ENCODE measurements at regions of chr16 and their contacts with region 1.

Region 1: DNA sequence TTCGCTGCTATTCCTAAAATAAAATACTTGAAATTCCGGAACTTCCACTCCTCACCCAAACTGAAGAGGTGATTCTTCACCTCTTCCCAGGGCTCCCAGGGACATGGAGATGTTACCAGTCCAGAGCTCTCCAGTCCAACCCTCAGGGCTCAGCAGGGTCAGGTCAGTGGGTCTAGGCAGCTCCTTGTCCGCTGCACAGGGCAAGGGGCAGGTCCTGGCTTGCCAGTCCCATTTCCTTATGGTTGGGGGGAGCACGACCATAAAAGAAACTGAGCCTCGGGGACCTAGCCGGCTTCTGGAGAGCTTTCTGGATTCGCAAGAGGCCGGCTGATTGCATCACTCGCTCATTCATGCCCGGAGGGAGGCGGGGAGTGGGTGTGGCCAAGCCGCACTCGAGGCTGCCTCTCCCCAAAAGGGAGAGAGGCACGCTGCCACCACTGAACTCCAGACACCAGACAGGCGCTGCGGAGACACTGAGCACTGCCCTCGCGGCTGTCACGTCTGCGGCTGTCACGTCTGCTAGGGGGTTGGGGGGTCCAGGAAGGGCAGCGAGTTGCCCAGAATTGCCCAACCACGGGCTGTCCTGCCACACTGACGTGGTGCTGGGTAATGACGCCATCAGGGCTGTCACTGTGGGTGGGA is 15.8 kb downstream of the SLC7A5 start:
- DNase-seq: peak; percentile 95
- H3K4me3 Mint-ChIP-seq: peak overlapping the region; percentile 65
- H3K27ac Mint-ChIP-seq: peak overlapping the region; percentile 89
- H3K4me1 Mint-ChIP-seq: peaks cover 60% of the 10 kb centered on the region
- H3K27me3 Mint-ChIP-seq: no peaks in the 10 kb centered on the region

Region 2: GRCh38 chr16:87252269-87252970 is 601.1 kb before region 1 on chr16:
- CTCF ChIA-PET with region 1: no interaction called
- DNase-seq: no peak
- H3K4me3 Mint-ChIP-seq: no peak overlapping the region
- H3K27ac Mint-ChIP-seq: no peak overlapping the region
- H3K4me1 Mint-ChIP-seq: peaks cover 8% of the 10 kb centered on the region
- H3K27me3 Mint-ChIP-seq: peaks cover 7% of the 10 kb centered on the region

Region 3: GRCh38 chr16:87806603-87807546 is 46.7 kb before region 1 on chr16:
- CTCF ChIA-PET with region 1: interaction called, 12 read pairs
- DNase-seq: peak; percentile 74
- H3K4me3 Mint-ChIP-seq: peak overlapping the region; percentile 83
- H3K27ac Mint-ChIP-seq: peak overlapping the region; percentile 97
- H3K4me1 Mint-ChIP-seq: peaks cover 45% of the 10 kb centered on the region
- H3K27me3 Mint-ChIP-seq: peaks cover 45% of the 10 kb centered on the region

Region 4: DNA sequence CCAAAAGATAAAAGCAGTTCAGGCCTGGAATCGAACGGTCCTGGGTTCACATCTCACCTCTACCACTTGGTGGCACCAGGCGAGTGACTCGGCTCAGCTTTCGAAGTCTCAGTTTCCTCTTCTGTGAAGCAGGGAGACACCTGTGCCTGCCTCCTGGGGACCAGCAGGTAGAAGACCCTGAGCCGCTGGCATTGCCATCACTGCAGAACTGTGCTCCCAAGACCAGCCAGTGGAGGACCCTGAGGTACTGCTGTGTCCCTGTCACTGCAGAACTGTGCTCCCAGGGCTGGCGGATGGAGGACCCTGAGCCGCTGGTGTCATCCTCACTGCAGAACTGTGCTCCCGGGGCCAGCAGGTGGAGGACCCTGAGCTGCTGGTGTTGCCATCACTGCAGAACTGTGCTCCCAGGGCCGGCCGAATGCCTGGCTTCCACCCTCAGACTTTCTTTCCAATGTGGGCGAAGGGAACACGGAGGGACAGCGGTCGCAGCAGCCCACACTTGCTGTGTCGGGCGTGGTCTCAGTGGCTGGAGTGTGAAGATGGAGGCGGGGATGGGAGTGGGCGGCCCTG is 24.5 kb after region 1 on chr16:
- CTCF ChIA-PET with region 1: interaction called, 254 read pairs
- DNase-seq: peak; percentile 62
- H3K4me3 Mint-ChIP-seq: no peak overlapping the region
- H3K27ac Mint-ChIP-seq: no peak overlapping the region
- H3K4me1 Mint-ChIP-seq: peaks cover 25% of the 10 kb centered on the region
- H3K27me3 Mint-ChIP-seq: peaks cover 42% of the 10 kb centered on the region

Region 5: GRCh38 chr16:87895641-87896141 is 42.2 kb after region 1 on chr16:
- CTCF ChIA-PET with region 1: interaction called, 14 read pairs
- DNase-seq: peak; percentile 87
- H3K4me3 Mint-ChIP-seq: peak overlapping the region; percentile 36
- H3K27ac Mint-ChIP-seq: peak overlapping the region; percentile 95
- H3K4me1 Mint-ChIP-seq: peaks cover 57% of the 10 kb centered on the region
- H3K27me3 Mint-ChIP-seq: no peaks in the 10 kb centered on the region

Region 6: DNA sequence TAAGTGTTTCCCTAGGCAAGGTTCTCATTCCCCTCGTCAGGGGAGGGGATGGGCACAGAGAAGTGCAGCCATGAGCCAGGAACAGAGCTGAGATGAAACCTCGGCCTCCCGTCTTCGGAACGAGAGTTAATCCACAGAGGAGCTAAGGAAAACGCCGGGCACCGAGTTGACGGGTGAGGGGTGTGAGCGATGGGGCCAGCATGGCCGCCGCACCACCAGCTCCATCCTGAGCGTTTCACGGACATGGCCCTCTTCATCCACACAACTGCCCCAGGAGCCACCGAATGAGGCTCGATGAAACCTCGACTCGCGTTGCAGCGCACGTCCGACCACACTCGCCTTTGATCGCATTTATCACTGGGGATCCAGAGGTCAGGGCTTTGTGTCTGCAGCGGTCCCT is 61.3 kb after region 1 on chr16:
- CTCF ChIA-PET with region 1: interaction called, 11 read pairs
- DNase-seq: no peak
- H3K4me3 Mint-ChIP-seq: no peak overlapping the region
- H3K27ac Mint-ChIP-seq: no peak overlapping the region
- H3K4me1 Mint-ChIP-seq: peaks cover 9% of the 10 kb centered on the region
- H3K27me3 Mint-ChIP-seq: peaks cover 39% of the 10 kb centered on the region

Measured in activated naive CD4-positive, alpha-beta T cell treated with anti-CD3 and anti-CD28 coated beads, Interleukin-2, amount 10 ng/mL, durations not matched to agents 7 days and 5 days (primary cell).